ENCODE measurements at regions of chr13 and their contacts with region 1.

Region 1: GRCh38 chr13:24605923-24606372 is 74.3 kb upstream of the ATP12A start:
- DNase-seq: peak; percentile 47
- ATAC-seq: peak; percentile 94
- H3K4me3 ChIP-seq: no peak overlapping the region
- H3K27ac ChIP-seq: no peak overlapping the region
- H3K4me1 ChIP-seq: no peaks in the 10 kb centered on the region
- H3K27me3 ChIP-seq: peaks cover 0 to 3% of the 10 kb centered on the region in 2 experiments; a peak in 1 of 5 replicates
- CTCF ChIP-seq: peak; percentile 59
- EP300 ChIP-seq: no peak
- POLR2A ChIP-seq: no peak
- RAD21 ChIP-seq: no peak

Region 2: DNA sequence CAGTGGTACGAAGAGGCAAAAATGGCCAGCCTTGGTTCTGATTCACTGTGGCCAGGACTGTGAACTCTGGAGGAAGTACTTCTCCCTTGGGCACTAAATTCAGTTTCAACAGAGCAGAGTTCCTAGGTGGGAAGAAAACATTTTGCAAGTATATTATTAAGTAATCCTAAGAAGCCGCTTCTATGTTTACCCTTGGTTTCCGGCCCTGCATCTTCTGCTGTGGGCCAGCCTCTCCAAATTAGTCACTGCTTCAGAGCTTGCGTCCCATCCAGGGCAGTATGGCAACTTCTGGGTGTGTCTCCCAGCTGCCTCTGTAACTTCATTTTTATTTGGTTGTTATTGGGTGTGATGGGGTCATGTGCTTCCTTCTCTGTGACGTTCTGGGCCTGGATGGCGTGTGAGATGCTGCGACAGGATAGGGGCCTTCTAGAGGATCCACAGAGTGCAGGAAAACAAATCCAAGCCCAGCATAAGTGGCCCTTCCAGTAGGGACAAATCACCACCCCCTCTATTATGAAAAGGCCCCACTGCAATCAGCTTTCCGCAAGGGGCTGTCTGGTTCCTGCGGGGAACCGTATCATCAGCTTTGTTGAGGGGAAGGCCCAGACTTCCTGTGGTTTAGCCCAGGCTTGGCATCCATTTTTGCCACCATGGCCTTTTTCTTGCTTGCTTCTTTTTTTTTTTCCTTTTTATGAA is 351.7 kb before region 1 on chr13:
- CTCF ChIA-PET with region 1: no interaction called
- POLR2A ChIA-PET with region 1: no interaction called
- in situ Hi-C with region 1: no loop called
- intact Hi-C with region 1: no loop called
- DNase-seq: no peak
- ATAC-seq: no peak
- H3K4me3 ChIP-seq: no peak overlapping the region
- H3K27ac ChIP-seq: no peak overlapping the region
- H3K4me1 ChIP-seq: no peaks in the 10 kb centered on the region
- H3K27me3 ChIP-seq: no peaks in the 10 kb centered on the region
- CTCF ChIP-seq: no peak
- EP300 ChIP-seq: no peak
- POLR2A ChIP-seq: no peak
- RAD21 ChIP-seq: no peak

Region 3: DNA sequence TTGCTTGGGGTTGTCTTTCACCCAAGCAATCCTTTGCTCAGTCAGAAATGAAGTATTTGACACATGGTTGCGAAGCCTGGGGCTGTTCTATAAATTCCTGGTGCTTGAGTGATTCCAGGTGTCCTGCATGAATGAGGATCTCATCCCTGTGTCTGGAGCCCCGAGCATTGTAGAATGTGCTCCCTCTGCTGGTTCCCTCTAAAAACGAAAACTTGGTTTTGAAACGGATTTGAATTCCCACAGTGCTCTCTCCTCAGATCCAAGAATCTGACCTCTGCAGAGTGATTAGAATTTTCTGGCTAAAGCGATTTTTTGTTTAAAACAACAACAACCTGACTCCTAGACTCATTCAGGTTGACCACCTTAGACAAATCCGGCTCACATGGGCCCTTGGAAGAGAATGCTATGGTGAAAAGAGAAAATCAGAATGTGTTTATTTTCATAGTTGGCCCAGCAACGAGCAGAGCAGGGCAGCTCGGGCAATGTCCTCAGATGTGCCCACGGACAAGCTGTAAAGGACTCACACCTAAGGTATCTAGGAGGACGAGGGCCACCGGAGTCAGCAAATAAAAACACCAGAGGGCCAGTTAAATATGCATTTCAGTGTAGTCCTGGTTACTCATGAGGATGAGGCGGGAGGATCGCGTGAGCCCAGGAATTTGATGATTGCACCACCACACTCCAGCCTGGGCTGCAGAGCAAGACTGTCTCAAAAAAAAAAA is 65.6 kb after region 1 on chr13:
- CTCF ChIA-PET with region 1: interaction called, 4 read pairs
- POLR2A ChIA-PET with region 1: no interaction called
- in situ Hi-C with region 1: loop called (anchors 5 kb)
- intact Hi-C with region 1: loop called (anchors 1 kb)
- DNase-seq: peak; percentile 54
- ATAC-seq: peak; percentile 89
- H3K4me3 ChIP-seq: peak overlapping the region in 1 of 3 experiments; percentile 10; a peak in 1 of 6 replicates
- H3K27ac ChIP-seq: no peak overlapping the region
- H3K4me1 ChIP-seq: peaks cover 9% of the 10 kb centered on the region; the same call in 1 of the 2 replicates
- H3K27me3 ChIP-seq: peaks cover 6 to 44% of the 10 kb centered on the region in 2 experiments; a peak in 4 of 5 replicates
- CTCF ChIP-seq: peak; percentile 66
- EP300 ChIP-seq: no peak
- POLR2A ChIP-seq: no peak
- RAD21 ChIP-seq: no peak